Ascending aorta (tissue), 2 donors: ENCODE measurements at regions of chr17 and their contacts with region 1.

Region 1: DNA sequence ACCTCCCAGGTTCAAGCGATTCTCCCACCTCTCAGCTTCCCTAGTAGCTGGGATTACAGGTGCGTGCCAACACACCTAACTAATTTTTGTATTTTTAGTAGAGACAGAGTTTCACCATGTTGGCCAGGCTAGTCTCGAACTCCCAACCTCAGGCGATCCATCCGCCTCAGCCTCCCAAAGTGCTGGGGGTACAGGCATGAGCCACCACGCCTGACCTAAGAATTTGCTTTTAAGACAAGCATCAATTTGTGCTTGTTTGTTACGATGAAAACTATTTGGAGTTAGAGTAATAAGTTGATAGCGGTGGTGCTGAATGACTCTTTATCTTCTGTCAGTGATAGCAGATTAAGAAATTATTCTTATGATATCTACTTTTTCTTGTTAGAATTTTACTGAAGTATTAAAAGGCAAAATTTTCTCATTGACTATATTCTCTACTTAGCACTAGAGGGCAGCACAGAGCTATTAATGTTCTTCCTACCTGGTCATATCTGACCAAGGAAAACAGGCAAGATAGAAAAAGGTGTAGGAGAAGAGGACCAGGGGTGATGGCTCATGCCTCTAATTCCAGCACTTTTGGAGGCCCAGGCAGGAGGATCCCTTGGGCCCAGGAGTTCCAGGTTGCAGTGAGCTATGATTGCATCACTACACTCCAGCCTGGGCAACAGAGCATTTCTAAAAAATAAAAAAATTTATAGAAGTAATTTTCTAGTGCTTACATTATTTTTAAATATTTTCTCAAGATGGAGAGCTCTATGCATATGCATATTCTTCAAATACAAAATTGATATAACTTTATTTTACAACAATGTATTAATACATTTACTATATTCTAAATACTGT is 24.5 kb downstream of the STXBP4 start:
- DNase-seq: no peak
- H3K4me3 ChIP-seq: no peak overlapping the region
- H3K27ac ChIP-seq: no peak overlapping the region
- H3K4me1 ChIP-seq: no peaks in the 10 kb centered on the region
- H3K27me3 ChIP-seq: no peaks in the 10 kb centered on the region
- CTCF ChIP-seq: peak; percentile 46 to 65 (median 59)

Region 2: DNA sequence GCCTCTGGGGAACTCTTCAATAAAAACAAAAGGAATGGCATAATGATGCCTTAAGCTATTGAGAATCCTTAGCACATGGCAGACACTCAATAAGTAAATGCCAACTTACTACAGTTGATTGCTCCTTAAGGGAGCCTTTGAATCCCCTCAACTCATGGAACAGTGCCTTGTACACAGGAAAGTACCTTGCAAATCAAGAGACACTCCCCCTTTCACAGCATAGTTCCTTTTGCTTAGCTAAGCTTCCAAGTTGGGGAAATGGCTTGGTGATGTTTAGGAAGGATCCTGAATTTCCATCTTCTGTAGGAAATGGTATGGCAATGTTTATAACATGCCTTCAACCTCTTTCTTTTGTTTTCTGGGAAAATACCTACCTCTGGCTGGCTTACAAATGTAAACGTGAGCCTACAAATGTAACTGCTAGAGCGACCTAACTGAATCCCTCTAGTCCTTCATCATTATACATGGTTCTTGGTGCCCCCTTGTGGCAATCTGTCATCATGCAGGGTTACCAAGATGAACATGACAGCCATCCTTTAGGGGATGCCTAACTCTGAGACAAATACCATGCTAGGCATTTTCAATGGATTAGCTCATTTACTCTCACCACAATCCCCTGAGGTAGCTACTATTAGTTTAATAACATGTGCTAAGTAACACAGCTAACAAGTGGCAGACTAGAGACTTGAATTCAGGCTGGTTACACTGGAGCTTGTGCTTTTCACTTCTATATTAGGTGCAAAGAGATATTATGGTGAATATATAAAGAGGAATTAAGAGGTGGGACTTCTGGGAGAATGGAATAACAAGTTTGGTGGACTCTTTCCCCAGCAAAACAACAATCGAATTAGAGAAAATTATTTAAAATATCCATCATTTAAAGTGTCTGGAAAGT is 363.7 kb after region 1 on chr17:
- intact Hi-C with region 1: loop called (anchors 1 kb)
- DNase-seq: peak in 1 of 2 donors; percentile 78
- H3K4me3 ChIP-seq: no peak overlapping the region
- H3K27ac ChIP-seq: no peak overlapping the region
- H3K4me1 ChIP-seq: no peaks in the 10 kb centered on the region
- H3K27me3 ChIP-seq: no peaks in the 10 kb centered on the region
- CTCF ChIP-seq: peak; percentile 57 to 67 (median 64)